Posterior cingulate gyrus (tissue), 11 donors: ENCODE measurements at regions of chr1 and their contacts with region 1.

Region 1: GRCh38 chr1:203625628-203626019 is 1.0 kb upstream of the ATP2B4 start:
- DNase-seq: peak in 3 of 10 donors; percentile 17 to 62 (median 42)

Region 2: DNA sequence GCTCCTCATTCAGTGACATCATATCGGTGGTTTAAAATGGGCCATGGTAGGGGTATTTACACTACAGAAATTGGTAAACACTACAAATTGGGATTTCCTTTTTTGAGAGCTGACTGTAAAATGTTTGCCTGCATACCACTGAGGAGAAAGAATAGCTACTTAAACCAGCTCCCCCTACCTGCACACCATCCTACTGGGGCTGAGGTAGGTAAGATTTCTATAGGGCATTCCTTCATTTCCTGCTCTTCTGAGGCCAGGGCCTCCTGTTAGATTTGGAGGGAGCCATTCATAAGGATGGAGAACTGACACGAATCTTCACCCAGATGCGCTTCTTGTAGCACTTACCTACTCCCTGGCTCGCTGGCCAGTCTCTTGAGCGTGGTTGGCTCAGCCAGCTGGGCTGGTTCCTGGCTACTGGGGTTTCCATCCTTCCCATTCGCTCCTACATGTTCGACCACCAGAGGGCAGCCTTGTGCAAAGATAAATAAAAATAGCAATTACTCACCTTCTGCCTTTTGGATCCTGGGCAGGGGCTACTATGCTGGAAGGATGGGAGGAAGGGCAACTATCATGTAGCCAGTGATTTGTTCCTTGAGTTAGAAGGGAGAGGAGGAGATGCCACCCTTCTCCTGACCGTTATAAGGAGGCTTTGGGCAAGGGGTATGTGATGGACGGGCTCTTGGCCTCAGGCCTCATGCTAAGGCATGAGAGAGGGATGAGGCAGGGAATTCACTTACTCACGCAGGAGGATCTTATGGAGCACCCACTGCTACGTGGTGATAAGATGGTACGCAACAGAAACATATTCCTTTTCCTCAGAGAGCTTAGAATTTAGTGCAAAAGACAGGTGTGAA is 121.0 kb before region 1 on chr1:
- intact Hi-C with region 1: loop called (anchors 2 kb)
- DNase-seq: peak; percentile 43 to 95 (median 82)

Region 3: GRCh38 chr1:203652724-203653461 is 27.3 kb after region 1 on chr1:
- intact Hi-C with region 1: no loop called
- DNase-seq: no peak

Region 4: GRCh38 chr1:203769505-203770343 is 144.1 kb after region 1 on chr1:
- intact Hi-C with region 1: loop called (anchors 10 kb)
- DNase-seq: peak in 7 of 10 donors; percentile 11 to 88 (median 36)